ENCODE measurements at regions of chr9 and their contacts with region 1.

Region 1: GRCh38 chr9:97598461-97599288 is 34.5 kb downstream of the TSTD2 start:
- DNase-seq: peak; percentile 82 to 86
- H3K4me3 ChIP-seq: no peak overlapping the region
- H3K27ac ChIP-seq: peak overlapping the region; percentile 78 to 82
- H3K4me1 ChIP-seq: peaks cover 0 to 57% (median 38%) of the 10 kb centered on the region in 4 donors
- H3K27me3 ChIP-seq: no peaks in the 10 kb centered on the region
- CTCF ChIP-seq: peak; percentile 68 to 85

Region 2: DNA sequence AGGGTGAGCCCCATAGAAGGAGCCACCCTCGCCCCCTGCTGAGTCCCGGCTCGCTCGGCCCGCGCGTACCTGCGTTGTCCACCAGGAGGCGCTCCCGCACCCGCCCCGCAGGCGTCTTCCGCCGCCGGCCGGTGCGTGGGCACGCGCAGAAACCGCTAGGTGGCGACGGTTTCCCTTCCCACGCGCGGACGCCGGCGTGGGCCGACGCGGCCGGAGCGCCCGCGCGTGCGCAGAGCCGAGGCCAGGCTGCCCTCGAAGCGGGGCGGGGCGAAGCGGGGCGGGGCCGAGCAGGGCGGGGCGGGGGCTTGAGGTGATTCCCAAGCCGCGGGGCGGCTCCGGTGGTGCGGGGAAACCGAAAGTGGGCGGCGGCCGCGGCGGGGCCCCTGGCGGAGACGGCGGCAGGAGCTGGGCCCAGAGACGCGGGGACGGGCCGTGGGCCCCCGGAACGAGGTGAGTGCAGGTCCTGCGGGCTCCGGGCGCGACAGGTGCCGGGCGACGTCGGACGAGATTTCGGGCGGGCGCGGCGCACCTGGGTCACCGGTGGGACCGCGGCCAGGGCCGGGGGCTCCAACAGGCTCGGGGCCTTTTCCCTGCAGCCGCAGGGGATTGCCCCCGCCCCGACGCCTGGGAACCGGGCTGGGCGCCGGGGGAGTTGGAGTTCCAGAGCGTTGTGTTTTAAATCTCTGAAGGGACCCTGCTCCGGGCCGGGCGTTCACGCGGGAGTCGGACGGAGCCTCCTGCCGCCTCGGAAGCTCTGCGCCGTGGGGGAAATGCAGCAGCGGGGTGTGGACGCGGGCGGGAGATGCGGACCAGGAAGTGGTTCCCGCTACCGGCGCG is 186.7 kb before region 1 on chr9 and contains the start of gene TDRD7:
- intact Hi-C with region 1: loop called (anchors 5 kb)
- DNase-seq: peak; percentile 63 to 91
- H3K4me3 ChIP-seq: peak within 1 kb of the TSS; percentile 96 to 100
- H3K27ac ChIP-seq: peak within 1 kb of the TSS; percentile 91 to 93
- H3K4me1 ChIP-seq: peaks cover 0 to 25% (median 12%) of the 10 kb centered on the region in 4 donors
- H3K27me3 ChIP-seq: peaks cover 0 to 3% of the 10 kb centered on the region in 2 donors
- CTCF ChIP-seq: peak; percentile 99

Region 3: GRCh38 chr9:97468658-97469448 is 129.8 kb before region 1 on chr9:
- intact Hi-C with region 1: loop called (anchors 5 kb)
- DNase-seq: peak; percentile 91
- H3K4me3 ChIP-seq: no peak overlapping the region
- H3K27ac ChIP-seq: peak overlapping the region; percentile 75 to 82
- H3K4me1 ChIP-seq: peaks cover 0 to 23% (median 13%) of the 10 kb centered on the region in 4 donors
- H3K27me3 ChIP-seq: no peaks in the 10 kb centered on the region
- CTCF ChIP-seq: peak; percentile 84 to 96

Region 4: GRCh38 chr9:97479496-97480159 is 119.0 kb before region 1 on chr9:
- intact Hi-C with region 1: no loop called
- DNase-seq: no peak
- H3K4me3 ChIP-seq: no peak overlapping the region
- H3K27ac ChIP-seq: peak overlapping the region; percentile 59 to 73
- H3K4me1 ChIP-seq: peaks cover 0 to 15% (median 3%) of the 10 kb centered on the region in 4 donors
- H3K27me3 ChIP-seq: no peaks in the 10 kb centered on the region
- CTCF ChIP-seq: no peak

Region 5: DNA sequence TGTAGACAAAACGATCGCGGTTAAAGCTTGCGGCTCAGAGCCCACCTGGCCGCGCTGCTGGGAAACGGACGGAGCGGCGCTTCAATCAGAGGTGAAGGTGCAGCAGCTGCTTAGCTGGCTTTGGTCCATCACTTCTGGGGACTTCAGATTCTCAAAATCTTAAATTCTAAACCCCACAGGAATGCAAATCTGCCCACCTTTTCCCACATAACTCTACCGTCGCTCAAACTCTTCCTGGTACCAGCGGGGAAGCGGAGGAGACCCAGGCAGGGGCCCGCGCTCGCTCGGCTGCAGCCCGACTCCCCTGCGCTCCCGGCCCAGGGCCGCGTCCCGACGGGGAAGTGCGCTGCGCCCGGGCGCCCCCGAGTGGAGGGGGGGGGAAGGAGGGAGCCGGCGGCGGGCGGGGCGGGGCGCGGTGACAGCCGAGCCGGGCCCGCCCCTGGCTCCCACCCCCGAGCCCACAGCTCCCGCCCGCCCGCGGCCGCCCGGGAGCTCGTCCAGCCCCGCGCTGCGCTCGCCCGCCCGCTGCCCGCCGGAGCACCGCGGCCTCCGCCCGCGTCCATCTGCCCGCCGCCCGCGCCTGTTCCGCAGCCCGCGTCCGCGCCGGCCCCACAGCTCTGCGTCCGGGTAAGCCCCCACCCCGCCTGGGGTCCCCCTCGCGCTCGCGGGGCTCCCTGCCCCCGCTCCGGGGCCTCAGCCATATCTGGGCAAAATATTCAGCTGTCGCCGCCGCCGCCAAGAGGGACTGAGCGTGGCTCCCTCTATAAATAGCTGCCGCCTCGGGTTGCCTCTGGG is 97.3 kb before region 1 on chr9 and contains the start of gene TMOD1:
- intact Hi-C with region 1: loop called (anchors 5 kb)
- DNase-seq: peak; percentile 62 to 90
- H3K4me3 ChIP-seq: peak within 1 kb of the TSS; percentile 67 to 99
- H3K27ac ChIP-seq: peak within 1 kb of the TSS; percentile 94 to 99
- H3K4me1 ChIP-seq: peaks cover 0 to 40% (median 24%) of the 10 kb centered on the region in 4 donors
- H3K27me3 ChIP-seq: no peaks in the 10 kb centered on the region
- CTCF ChIP-seq: no peak